ENCODE measurements at regions of chr1 and their contacts with region 1.

Region 1: GRCh38 chr1:97791251-97791650 is 129.6 kb downstream of the DPYD start:
- DNase-seq: peak; percentile 45
- ATAC-seq: peak; percentile 89
- H3K4me3 ChIP-seq: no peak overlapping the region
- H3K27ac ChIP-seq: no peak overlapping the region
- H3K4me1 ChIP-seq: peaks cover 10% of the 10 kb centered on the region; the same call in 1 of the 2 replicates
- H3K27me3 ChIP-seq: no peaks in the 10 kb centered on the region
- CTCF ChIP-seq: no peak
- EP300 ChIP-seq: peak in 1 of 2 experiments; percentile 46; a peak in 2 of 4 replicates
- POLR2A ChIP-seq: no peak
- RAD21 ChIP-seq: no peak

Region 2: DNA sequence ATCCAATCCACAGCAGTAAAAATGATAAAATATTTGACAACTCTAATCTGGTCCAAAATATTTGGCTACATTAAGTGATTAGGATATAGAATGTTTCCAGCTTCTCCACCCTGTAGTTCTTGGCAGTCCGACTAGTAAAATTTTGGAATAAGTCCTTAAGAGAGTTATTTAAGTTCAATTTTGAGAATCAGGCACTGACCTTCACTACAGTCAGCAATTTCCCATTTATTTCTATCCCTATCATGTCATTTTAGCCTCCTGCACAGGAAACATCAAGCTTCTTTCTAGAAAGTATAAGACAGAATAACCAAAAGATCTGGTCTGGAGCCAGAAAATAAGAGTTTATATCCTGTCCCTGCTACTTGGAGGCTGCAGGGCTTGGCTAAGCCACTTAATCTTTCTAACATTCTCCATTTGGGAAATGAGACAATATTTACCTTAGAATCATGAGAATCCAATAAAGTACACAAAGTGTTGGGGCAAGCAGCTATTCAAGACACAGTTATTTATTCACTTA is 32.7 kb before region 1 on chr1:
- CTCF ChIA-PET with region 1: no interaction called
- POLR2A ChIA-PET with region 1: no interaction called
- RAD21 ChIA-PET with region 1: no interaction called
- SMC1A ChIA-PET with region 1: no interaction called
- in situ Hi-C with region 1: no loop called
- intact Hi-C with region 1: no loop called
- DNase-seq: no peak
- ATAC-seq: no peak
- H3K4me3 ChIP-seq: no peak overlapping the region
- H3K27ac ChIP-seq: no peak overlapping the region
- H3K4me1 ChIP-seq: no peaks in the 10 kb centered on the region
- H3K27me3 ChIP-seq: no peaks in the 10 kb centered on the region
- CTCF ChIP-seq: no peak
- EP300 ChIP-seq: no peak
- POLR2A ChIP-seq: no peak
- RAD21 ChIP-seq: no peak

Region 3: DNA sequence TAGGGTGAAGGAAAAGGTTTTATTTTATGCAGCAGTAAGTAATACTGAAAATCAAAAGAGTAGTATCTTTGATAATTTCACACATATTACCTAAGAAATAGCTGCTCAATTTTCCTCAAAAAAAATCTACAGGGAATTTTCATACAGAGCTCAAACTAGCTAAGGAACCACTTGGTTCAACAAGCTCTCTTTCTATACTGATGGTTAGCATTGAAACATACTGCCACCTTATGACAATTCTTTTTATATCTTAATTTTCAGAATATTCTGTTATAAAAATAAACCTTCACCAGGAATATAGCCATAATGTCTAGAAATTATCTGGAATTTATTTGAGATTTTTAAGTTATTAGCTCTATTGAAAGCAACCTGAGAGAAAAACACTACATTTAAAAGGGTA is 12.5 kb before region 1 on chr1:
- CTCF ChIA-PET with region 1: interaction called, 6 read pairs
- POLR2A ChIA-PET with region 1: no interaction called
- RAD21 ChIA-PET with region 1: interaction called, 3 read pairs
- SMC1A ChIA-PET with region 1: interaction called, 11 read pairs
- in situ Hi-C with region 1: no loop called
- intact Hi-C with region 1: no loop called
- DNase-seq: no peak
- ATAC-seq: no peak
- H3K4me3 ChIP-seq: no peak overlapping the region
- H3K27ac ChIP-seq: no peak overlapping the region
- H3K4me1 ChIP-seq: no peaks in the 10 kb centered on the region
- H3K27me3 ChIP-seq: no peaks in the 10 kb centered on the region
- CTCF ChIP-seq: no peak; a peak in 1 of 6 replicates
- EP300 ChIP-seq: no peak
- POLR2A ChIP-seq: no peak
- RAD21 ChIP-seq: no peak

Region 4: GRCh38 chr1:97901017-97901658 is 109.9 kb after region 1 on chr1:
- CTCF ChIA-PET with region 1: no interaction called
- POLR2A ChIA-PET with region 1: no interaction called
- RAD21 ChIA-PET with region 1: no interaction called
- SMC1A ChIA-PET with region 1: no interaction called
- in situ Hi-C with region 1: no loop called
- intact Hi-C with region 1: no loop called
- DNase-seq: no peak
- ATAC-seq: no peak
- H3K4me3 ChIP-seq: no peak overlapping the region
- H3K27ac ChIP-seq: no peak overlapping the region
- H3K4me1 ChIP-seq: no peaks in the 10 kb centered on the region
- H3K27me3 ChIP-seq: no peaks in the 10 kb centered on the region
- CTCF ChIP-seq: no peak
- EP300 ChIP-seq: no peak
- POLR2A ChIP-seq: no peak
- RAD21 ChIP-seq: no peak

Measured in GM12878 (cell line).